Calu3 (cell line): ENCODE measurements at regions of chr3 and their contacts with region 1.

Region 1: DNA sequence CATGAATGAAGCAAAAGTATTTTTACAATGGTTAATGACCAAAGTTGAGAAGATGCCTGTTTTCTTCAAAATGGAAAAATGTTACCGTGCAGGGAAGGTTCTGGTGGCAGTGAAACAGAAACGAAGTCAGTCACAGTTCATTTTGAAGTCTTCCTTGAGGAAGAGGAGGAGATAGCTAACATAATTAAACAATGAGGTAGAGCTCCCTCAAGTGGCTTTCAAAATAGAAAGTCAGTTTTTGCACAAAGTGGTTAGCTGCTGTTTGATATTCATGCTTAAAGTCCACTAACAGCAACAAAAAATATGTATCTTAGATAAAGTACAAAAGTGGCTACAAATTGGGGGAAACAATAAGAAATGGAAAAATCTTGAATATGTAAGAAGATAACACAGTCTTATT is 87.3 kb downstream of the TFG start:
- DNase-seq: no peak
- H3K4me3 Mint-ChIP-seq: no peak overlapping the region
- H3K27ac Mint-ChIP-seq: no peak overlapping the region
- H3K4me1 Mint-ChIP-seq: no peaks in the 10 kb centered on the region
- H3K27me3 Mint-ChIP-seq: no peaks in the 10 kb centered on the region
- CTCF ChIP-seq: peak; percentile 22

Region 2: GRCh38 chr3:100316641-100317069 is 479.9 kb before region 1 on chr3:
- CTCF ChIA-PET with region 1: no interaction called
- intact Hi-C with region 1: loop called (anchors 5 kb)
- DNase-seq: peak; percentile 34
- H3K4me3 Mint-ChIP-seq: no peak overlapping the region
- H3K27ac Mint-ChIP-seq: no peak overlapping the region
- H3K4me1 Mint-ChIP-seq: no peaks in the 10 kb centered on the region
- H3K27me3 Mint-ChIP-seq: no peaks in the 10 kb centered on the region
- CTCF ChIP-seq: peak; percentile 57

Region 3: DNA sequence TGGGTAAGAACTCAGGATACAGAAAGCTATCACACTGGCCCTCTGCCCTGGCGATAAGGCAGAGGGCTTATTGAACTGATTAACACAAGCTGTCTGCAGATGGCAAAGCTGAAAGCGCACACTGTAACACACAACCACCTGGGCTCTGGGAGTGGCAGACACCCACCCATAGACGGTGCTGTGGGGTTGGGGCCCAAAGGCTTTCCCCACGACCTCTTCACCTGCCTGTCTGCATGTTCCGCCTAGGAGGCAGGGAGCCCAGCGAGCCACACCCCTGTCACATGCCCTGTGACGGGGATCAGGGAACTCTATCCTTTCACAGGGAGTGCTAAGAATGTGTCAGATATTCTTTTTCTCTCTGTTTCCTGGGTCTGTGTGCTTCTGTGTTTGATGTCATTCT is 99.4 kb before region 1 on chr3:
- CTCF ChIA-PET with region 1: no interaction called
- intact Hi-C with region 1: no loop called
- DNase-seq: peak; percentile 67
- H3K4me3 Mint-ChIP-seq: peak overlapping the region; percentile 17
- H3K27ac Mint-ChIP-seq: peak overlapping the region; percentile 71
- H3K4me1 Mint-ChIP-seq: peaks cover 60% of the 10 kb centered on the region
- H3K27me3 Mint-ChIP-seq: no peaks in the 10 kb centered on the region
- CTCF ChIP-seq: no peak